Naive thymus-derived CD4-positive, alpha-beta T cell (primary cell): ENCODE measurements at regions of chr1 and their contacts with region 1.

Region 1: GRCh38 chr1:18972531-18972930 is 16.1 kb upstream of the IFFO2 start:
- DNase-seq: peak in 5 of 9 donors; percentile 25 to 63 (median 49)
- ATAC-seq: peak; percentile 59
- H3K4me3 ChIP-seq: no peak overlapping the region
- H3K4me3 Mint-ChIP-seq: peak overlapping the region in 1 of 10 donors; percentile 49
- H3K27ac ChIP-seq: no peak overlapping the region
- H3K27ac Mint-ChIP-seq: peak overlapping the region in 1 of 9 donors; percentile 84
- H3K4me1 ChIP-seq: peaks cover 0 to 5% of the 10 kb centered on the region in 2 donors
- H3K4me1 Mint-ChIP-seq: peaks cover 0 to 9% (median 3%) of the 10 kb centered on the region in 7 donors
- H3K27me3 ChIP-seq: no peaks in the 10 kb centered on the region
- H3K27me3 Mint-ChIP-seq: peaks cover 0 to 16% (median 0%) of the 10 kb centered on the region in 5 donors

Region 2: GRCh38 chr1:18883636-18884418 is 88.7 kb before region 1 on chr1:
- CTCF ChIA-PET with region 1: interaction called, 19 read pairs
- POLR2A ChIA-PET with region 1: no interaction called
- intact Hi-C with region 1: loop called in 1 of 2 experiments (anchors 1 kb)
- DNase-seq: peak; percentile 40 to 70 (median 57)
- ATAC-seq: peak; percentile 85
- H3K4me3 ChIP-seq: no peak overlapping the region
- H3K4me3 Mint-ChIP-seq: no peak overlapping the region
- H3K27ac ChIP-seq: no peak overlapping the region
- H3K27ac Mint-ChIP-seq: no peak overlapping the region
- H3K4me1 ChIP-seq: no peaks in the 10 kb centered on the region
- H3K4me1 Mint-ChIP-seq: no peaks in the 10 kb centered on the region
- H3K27me3 ChIP-seq: no peaks in the 10 kb centered on the region
- H3K27me3 Mint-ChIP-seq: no peaks in the 10 kb centered on the region

Region 3: DNA sequence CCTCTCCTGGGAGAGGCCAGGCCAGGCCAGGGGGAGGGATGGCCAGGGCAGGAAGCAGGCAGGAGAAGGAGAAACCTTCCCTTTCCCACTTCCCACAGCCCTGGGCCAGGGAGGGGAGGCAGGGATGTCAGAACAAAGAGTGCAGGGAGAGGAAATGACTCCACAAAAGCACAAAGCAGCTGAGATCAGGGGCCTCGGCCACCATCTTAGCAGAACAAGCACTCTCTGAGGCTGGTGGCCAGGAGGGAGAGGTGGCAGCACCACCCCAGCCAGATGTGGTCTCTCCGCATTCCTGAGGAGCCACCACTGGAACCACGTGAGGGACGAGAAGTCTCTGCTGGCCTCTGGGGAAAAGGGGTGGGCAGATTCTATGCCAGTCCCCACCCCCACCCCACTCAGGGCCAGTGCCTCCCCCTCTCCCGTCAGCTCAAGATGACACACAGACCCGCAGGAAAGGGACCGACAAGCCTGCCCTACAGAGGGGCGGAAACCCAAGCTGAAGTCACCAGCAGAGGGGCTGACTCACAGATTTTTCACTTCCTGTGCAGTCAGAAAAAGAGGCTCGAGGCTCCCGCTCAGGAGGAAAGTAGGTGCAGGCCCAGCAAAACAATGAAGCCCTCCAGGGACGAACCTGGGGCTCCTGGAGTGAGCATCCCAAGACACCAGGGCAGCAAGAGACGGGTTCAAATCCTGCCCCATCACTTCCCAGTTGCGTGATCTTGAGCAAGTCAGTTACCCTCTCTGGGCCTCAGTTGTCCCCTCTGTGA is 46.0 kb before region 1 on chr1:
- CTCF ChIA-PET with region 1: interaction called, 16 read pairs
- POLR2A ChIA-PET with region 1: interaction called, 9 read pairs
- intact Hi-C with region 1: loop called in 1 of 2 experiments (anchors 1 kb)
- DNase-seq: peak; percentile 43 to 84 (median 73)
- ATAC-seq: peak; percentile 86
- H3K4me3 ChIP-seq: peak overlapping the region; percentile 84
- H3K4me3 Mint-ChIP-seq: peak overlapping the region; percentile 73 to 93 (median 83)
- H3K27ac ChIP-seq: peak overlapping the region; percentile 71
- H3K27ac Mint-ChIP-seq: peak overlapping the region; percentile 57 to 99 (median 95)
- H3K4me1 ChIP-seq: peaks cover 58 to 73% of the 10 kb centered on the region in 2 donors
- H3K4me1 Mint-ChIP-seq: peaks cover 34 to 90% (median 80%) of the 10 kb centered on the region in 7 donors
- H3K27me3 ChIP-seq: no peaks in the 10 kb centered on the region
- H3K27me3 Mint-ChIP-seq: no peaks in the 10 kb centered on the region

Region 4: GRCh38 chr1:18956369-18957135 is 16.0 kb before region 1 on chr1 and contains the start of gene IFFO2:
- CTCF ChIA-PET with region 1: interaction called, 15 read pairs
- POLR2A ChIA-PET with region 1: interaction called, 7 read pairs
- intact Hi-C with region 1: loop called in 1 of 2 experiments (anchors 1 kb)
- DNase-seq: peak; percentile 95 to 100 (median 97)
- ATAC-seq: peak; percentile 90
- H3K4me3 ChIP-seq: peak within 1 kb of the TSS; percentile 66
- H3K4me3 Mint-ChIP-seq: peak within 1 kb of the TSS; percentile 89 to 96 (median 93)
- H3K27ac ChIP-seq: peak within 1 kb of the TSS; percentile 98
- H3K27ac Mint-ChIP-seq: peak within 1 kb of the TSS; percentile 37 to 99 (median 92)
- H3K4me1 ChIP-seq: peaks cover 51 to 52% of the 10 kb centered on the region in 2 donors
- H3K4me1 Mint-ChIP-seq: peaks cover 47 to 58% (median 52%) of the 10 kb centered on the region in 7 donors
- H3K27me3 ChIP-seq: no peaks in the 10 kb centered on the region
- H3K27me3 Mint-ChIP-seq: peaks cover 0 to 28% (median 0%) of the 10 kb centered on the region in 5 donors
- total RNA-seq, gene IFFO2: 20.5 to 57.1 (median 28.2) TPM

Region 5: GRCh38 chr1:19096036-19096833 is 123.7 kb after region 1 on chr1:
- CTCF ChIA-PET with region 1: interaction called, 3 read pairs
- POLR2A ChIA-PET with region 1: no interaction called
- intact Hi-C with region 1: loop called in 1 of 2 experiments (anchors 1 kb)
- DNase-seq: peak in 5 of 9 donors; percentile 13 to 28 (median 24)
- ATAC-seq: no peak
- H3K4me3 ChIP-seq: no peak overlapping the region
- H3K4me3 Mint-ChIP-seq: no peak overlapping the region
- H3K27ac ChIP-seq: no peak overlapping the region
- H3K27ac Mint-ChIP-seq: peak overlapping the region in 2 of 9 donors; percentile 1 to 32
- H3K4me1 ChIP-seq: no peaks in the 10 kb centered on the region
- H3K4me1 Mint-ChIP-seq: peaks cover 0 to 7% (median 0%) of the 10 kb centered on the region in 7 donors
- H3K27me3 ChIP-seq: no peaks in the 10 kb centered on the region
- H3K27me3 Mint-ChIP-seq: no peaks in the 10 kb centered on the region